Posterior vena cava (tissue), 2 donors: ENCODE measurements at regions of chr2 and their contacts with region 1.

Region 1: DNA sequence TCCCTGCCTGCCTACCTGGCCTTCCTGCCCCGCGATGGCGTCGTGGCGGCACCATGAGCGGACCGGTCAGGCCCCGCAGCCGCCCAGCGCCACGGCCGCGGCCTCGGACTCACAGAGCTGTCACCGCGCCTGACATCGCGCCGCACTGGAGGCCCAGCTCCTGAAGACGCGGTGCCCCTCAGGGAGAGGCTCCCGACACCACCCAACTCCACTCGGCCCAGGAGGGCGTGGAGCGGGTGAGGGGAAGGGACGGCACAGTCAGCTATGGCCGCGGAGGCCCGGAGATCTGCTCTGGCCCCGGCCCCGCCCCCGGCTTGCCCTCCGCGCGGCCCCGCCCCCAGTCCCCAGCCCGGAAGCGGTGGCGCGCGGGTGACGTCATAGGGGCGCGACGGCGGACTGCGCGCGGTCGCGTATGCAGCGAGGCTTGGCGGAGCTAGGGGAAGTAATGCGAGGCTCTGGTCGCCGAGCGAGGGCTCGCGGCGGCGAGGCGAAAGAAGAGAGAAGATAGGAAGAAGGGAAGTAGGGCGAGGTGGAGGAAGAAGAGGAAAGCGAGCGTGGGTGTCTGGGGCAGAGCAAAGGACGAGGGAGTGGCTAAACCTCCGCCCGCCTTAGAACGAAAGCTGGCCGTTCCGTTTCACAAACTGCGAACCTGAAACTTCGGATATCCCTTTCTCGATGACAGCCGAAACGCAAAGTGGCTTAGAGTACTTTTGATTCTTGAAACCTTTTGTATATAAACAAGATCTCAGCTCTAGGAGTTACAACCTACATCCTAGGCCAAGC is at the start of gene SLC35F5:
- DNase-seq: peak; percentile 97
- total RNA-seq, gene SLC35F5: 62.5 to 81.9 TPM

Region 2: GRCh38 chr2:113889471-113890252 is 133.1 kb after region 1 on chr2 and contains the start of gene ACTR3:
- intact Hi-C with region 1: loop called in 1 of 2 experiments (anchors 10 kb)
- DNase-seq: peak; percentile 99
- total RNA-seq, gene ACTR3: 322 to 408 TPM

Region 3: GRCh38 chr2:113930448-113930847 is 173.9 kb after region 1 on chr2:
- intact Hi-C with region 1: loop called in 1 of 2 experiments (anchors 10 kb)
- DNase-seq: no peak